ENCODE measurements at regions of chr2 and their contacts with region 1.

Region 1: GRCh38 chr2:57497489-57498096 is 549.0 kb upstream of the VRK2 start:
- DNase-seq: no peak
- H3K4me3 ChIP-seq: no peak overlapping the region
- H3K27ac ChIP-seq: no peak overlapping the region
- H3K4me1 ChIP-seq: peaks cover 0 to 3% (median 0%) of the 10 kb centered on the region in 6 donors
- H3K27me3 ChIP-seq: no peaks in the 10 kb centered on the region
- CTCF ChIP-seq: peak in 10 of 11 experiments; percentile 23 to 69 (median 59)
- POLR2A ChIP-seq: no peak

Region 2: GRCh38 chr2:57044931-57045635 is 452.5 kb before region 1 on chr2:
- intact Hi-C with region 1: no loop called
- DNase-seq: no peak
- H3K4me3 ChIP-seq: no peak overlapping the region
- H3K27ac ChIP-seq: no peak overlapping the region
- H3K4me1 ChIP-seq: no peaks in the 10 kb centered on the region
- H3K27me3 ChIP-seq: no peaks in the 10 kb centered on the region
- CTCF ChIP-seq: no peak
- POLR2A ChIP-seq: no peak

Region 3: DNA sequence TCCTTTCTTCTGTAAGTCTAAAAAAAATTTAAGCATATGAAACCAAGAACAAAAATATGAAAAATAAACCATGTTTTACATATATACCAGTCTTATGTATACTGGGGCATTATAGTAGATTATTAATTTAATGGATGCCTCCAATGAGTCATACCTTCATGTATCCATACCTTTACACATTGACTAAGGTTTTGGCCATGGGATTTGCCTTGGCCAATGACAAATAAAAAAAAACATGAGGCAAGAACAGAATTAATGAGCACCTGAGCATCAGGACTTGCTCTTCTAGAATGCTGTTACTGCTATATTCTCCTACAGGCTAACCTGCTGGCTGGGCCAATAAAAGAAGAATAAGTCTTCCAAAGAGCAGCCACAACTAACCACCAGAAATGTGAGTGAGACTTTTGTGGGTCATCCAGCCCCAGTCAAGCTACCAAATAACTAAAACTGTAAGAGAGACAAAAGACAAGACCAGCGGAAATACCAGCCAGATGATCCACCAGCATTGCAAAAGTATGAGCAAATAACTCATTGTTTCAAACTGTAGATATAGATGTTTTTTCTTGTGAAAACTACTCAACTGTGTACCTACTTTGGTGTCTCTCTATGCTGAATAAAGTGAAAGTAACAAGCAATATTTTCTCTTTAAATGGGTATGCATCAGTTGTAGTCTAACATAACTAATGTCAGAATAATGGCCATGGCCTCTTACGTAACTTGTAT is 200.6 kb before region 1 on chr2:
- intact Hi-C with region 1: no loop called
- DNase-seq: no peak
- H3K4me3 ChIP-seq: no peak overlapping the region
- H3K27ac ChIP-seq: no peak overlapping the region
- H3K4me1 ChIP-seq: no peaks in the 10 kb centered on the region
- H3K27me3 ChIP-seq: no peaks in the 10 kb centered on the region
- CTCF ChIP-seq: no peak
- POLR2A ChIP-seq: no peak

Region 4: GRCh38 chr2:57376985-57377384 is 120.6 kb before region 1 on chr2:
- intact Hi-C with region 1: loop called (anchors 10 kb)
- DNase-seq: no peak
- H3K4me3 ChIP-seq: no peak overlapping the region
- H3K27ac ChIP-seq: no peak overlapping the region
- H3K4me1 ChIP-seq: no peaks in the 10 kb centered on the region
- H3K27me3 ChIP-seq: no peaks in the 10 kb centered on the region
- CTCF ChIP-seq: peak in 2 of 11 experiments; percentile 12 to 18
- POLR2A ChIP-seq: no peak

Region 5: GRCh38 chr2:58146707-58147106 is 649.1 kb after region 1 on chr2:
- intact Hi-C with region 1: no loop called
- DNase-seq: no peak
- H3K4me3 ChIP-seq: no peak overlapping the region
- H3K27ac ChIP-seq: no peak overlapping the region
- H3K4me1 ChIP-seq: no peaks in the 10 kb centered on the region
- H3K27me3 ChIP-seq: no peaks in the 10 kb centered on the region
- CTCF ChIP-seq: no peak
- POLR2A ChIP-seq: no peak